Motor neuron (in vitro differentiated cells): ENCODE measurements at regions of chr6 and their contacts with region 1.

Region 1: GRCh38 chr6:134174672-134175198 is 122.3 kb upstream of the SLC2A12 start:
- ATAC-seq: peak; percentile 45 to 92 (median 88)
- H3K4me3 ChIP-seq: peak overlapping the region; percentile 50 to 72 (median 56)
- H3K27ac ChIP-seq: peak overlapping the region; percentile 17 to 70
- H3K4me1 ChIP-seq: peaks cover 0 to 6% of the 10 kb centered on the region in 2 donors

Region 2: DNA sequence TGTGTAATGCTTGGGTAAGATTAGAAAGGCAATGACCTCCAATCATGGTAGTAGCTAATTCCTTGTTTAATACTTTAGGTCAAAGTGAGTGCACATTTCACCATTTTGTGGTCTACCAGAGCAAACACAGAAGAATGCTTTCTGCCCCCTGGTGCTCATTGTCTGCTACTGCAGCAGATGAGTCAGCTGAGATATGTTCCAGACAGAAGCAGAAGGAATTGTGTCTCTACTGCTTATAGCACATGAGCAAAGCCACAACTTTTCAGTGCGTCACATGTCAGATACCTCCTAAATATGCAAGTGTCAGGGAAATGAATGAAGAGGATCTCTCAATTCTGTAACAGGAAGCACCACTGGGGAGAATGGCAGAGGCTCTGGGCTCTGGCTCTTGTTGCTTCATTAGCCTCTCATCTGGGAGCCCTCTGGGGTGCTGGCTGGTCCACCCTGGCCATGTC is 466.3 kb after region 1 on chr6:
- in situ Hi-C with region 1: loop called in 5 of 9 experiments (anchors 25 kb)
- ATAC-seq: peak; percentile 44 to 85 (median 64)
- H3K4me3 ChIP-seq: no peak overlapping the region
- H3K27ac ChIP-seq: no peak overlapping the region
- H3K4me1 ChIP-seq: no peaks in the 10 kb centered on the region

Region 3: DNA sequence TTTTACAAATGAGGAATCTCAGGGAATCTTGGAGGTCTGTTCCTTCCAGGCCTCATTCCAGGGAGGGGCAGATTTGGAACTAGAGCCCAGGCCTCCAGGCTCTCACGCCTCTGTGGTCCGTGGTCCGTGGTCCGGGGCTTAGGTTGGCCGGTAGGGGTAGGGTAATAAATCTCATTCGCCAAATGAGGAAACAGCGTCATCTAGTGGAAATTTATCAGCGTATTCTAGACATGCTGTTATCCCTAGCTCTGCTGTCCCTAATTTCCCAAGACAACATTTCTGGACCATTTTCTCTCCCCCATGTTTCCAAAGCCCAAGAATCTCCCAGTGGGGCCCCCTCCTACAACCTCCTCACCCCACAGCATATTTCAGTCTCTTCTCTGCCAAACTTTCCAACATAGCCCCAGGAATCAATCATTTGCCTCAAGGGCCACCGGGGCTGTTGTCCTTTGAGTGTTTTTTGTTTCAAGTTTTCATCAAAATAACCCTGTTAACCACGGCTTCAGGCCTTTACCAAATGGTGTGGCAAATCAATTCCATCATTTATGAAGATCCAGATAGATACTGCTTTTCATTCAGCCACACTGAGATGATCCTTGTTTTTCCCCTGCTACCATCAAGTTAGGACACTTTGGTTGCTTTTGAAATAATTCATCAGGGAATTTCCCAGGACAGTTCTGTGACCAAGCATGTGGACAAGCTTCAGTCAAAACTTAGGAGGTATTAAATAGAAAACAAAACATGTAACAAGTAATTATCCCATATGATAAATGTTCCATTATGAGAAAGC is 648.4 kb after region 1 on chr6:
- in situ Hi-C with region 1: loop called in 3 of 9 experiments (anchors 10 to 25 kb)
- ATAC-seq: peak; percentile 71 to 100 (median 96)
- H3K4me3 ChIP-seq: no peak overlapping the region
- H3K27ac ChIP-seq: no peak overlapping the region
- H3K4me1 ChIP-seq: no peaks in the 10 kb centered on the region

Region 4: DNA sequence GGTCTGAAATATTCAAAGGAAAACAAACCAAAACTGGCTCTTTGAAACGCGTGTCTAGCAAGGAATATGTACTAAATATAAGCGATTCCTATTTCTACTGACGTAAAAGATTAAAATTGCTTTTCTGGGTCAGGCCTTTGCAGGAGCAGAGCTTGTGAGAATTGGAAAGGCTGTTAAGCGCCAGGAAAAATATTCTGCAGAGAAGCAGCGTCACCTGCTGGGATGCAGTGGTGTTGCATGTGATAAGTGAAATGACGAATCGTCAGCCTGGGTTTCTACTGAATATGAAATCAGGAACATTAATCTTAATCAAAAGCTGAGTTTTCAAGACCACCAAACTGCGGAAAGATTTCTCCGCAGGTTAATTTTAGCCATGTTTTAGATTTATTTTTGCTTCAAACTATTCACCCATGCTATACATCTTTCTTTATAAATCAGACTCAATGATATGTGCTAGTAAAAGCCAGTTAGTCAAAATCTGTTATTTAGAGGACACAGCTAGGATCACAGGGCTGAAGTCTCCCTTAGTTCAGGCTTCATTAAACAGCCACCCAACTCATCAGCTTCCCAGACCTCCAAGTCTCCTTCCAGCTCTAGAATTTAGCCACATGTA is 707.8 kb after region 1 on chr6:
- in situ Hi-C with region 1: loop called in 2 of 9 experiments (anchors 10 to 25 kb)
- ATAC-seq: peak; percentile 30 to 69 (median 48)
- H3K4me3 ChIP-seq: no peak overlapping the region
- H3K27ac ChIP-seq: no peak overlapping the region
- H3K4me1 ChIP-seq: no peaks in the 10 kb centered on the region

Region 5: GRCh38 chr6:134938896-134939295 is 764.2 kb after region 1 on chr6:
- in situ Hi-C with region 1: loop called in 1 of 9 experiments (anchors 25 kb)
- ATAC-seq: no peak
- H3K4me3 ChIP-seq: no peak overlapping the region
- H3K27ac ChIP-seq: no peak overlapping the region
- H3K4me1 ChIP-seq: peaks cover 7 to 17% of the 10 kb centered on the region in 2 donors